ENCODE measurements at regions of chr4 and their contacts with region 1.

Region 1: DNA sequence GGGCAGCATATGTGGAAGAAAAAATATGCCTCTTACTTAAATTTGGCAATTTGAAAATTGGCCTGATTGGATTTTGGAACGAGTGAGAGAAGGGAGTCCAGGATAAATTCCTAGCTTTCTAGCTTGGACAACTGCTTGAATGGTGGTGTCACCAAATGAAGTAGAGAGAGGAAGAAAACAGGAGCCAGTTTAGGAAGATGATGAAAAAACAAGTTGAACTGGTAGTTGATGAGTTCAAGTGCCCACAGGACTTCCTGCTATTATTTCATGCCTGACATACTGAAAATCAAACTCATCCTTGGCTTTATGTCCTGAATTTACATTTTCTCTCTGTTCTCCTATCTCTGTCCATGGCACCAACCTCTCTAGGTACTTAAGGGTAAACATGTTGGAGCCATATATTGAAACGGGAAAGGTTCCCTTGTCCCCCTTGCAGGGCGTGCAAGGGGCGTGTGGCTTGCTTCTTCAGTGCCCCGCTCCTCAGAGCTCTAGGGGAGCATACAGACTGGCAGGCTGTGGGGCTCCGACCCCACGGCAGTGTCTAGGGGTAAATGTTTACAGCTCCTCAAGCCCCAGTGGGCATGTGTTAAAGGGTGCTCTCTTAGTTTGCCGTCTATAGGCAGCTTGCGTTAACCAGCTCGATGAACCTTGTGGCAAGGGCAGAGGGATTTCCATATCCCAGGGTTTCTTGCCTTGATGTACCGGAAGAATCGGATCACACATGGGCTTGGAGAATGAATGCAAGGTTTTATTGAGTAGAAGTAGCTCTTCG is 250.7 kb upstream of the PGRMC2 start:
- DNase-seq: peak in 1 of 2 experiments; percentile 56
- H3K4me3 ChIP-seq: no peak overlapping the region
- H3K27ac ChIP-seq: no peak overlapping the region
- H3K4me1 ChIP-seq: peaks cover 9% of the 10 kb centered on the region; the same call in 1 of the 2 replicates
- H3K27me3 ChIP-seq: no peaks in the 10 kb centered on the region
- CTCF ChIP-seq: no peak

Region 2: DNA sequence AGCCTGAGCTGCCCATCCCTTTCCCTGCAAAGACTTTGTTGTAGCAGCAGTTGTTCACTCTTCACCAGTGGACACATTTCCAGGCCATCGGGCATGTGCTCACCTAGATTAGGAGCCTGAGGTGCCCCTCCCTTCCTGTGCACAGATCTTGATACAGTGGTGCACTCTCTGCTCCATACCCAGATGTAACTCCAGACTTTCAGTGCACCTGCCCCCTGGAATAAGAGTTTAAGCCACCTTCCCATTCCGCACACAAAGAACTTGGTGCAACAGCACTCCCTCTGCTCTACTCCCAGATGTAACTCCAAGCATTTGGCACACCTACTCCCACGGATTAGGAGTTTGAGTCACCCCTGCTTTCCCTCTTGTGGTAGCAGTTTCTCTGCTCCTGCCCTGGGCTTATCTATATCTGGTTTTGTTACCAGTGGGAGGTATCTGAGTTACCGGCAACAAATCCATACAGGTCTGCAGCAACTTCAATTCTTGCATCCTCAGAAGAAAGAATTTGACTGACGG is 693.6 kb before region 1 on chr4:
- CTCF ChIA-PET with region 1: no interaction called
- POLR2A ChIA-PET with region 1: no interaction called
- intact Hi-C with region 1: no loop called
- DNase-seq: no peak
- H3K4me3 ChIP-seq: no peak overlapping the region
- H3K27ac ChIP-seq: no peak overlapping the region
- H3K4me1 ChIP-seq: no peaks in the 10 kb centered on the region
- H3K27me3 ChIP-seq: no peaks in the 10 kb centered on the region
- CTCF ChIP-seq: no peak

Region 3: GRCh38 chr4:128502818-128503527 is 35.3 kb before region 1 on chr4:
- CTCF ChIA-PET with region 1: no interaction called
- POLR2A ChIA-PET with region 1: interaction called, 13 read pairs
- intact Hi-C with region 1: no loop called
- DNase-seq: no peak
- H3K4me3 ChIP-seq: no peak overlapping the region
- H3K27ac ChIP-seq: no peak overlapping the region
- H3K4me1 ChIP-seq: no peaks in the 10 kb centered on the region
- H3K27me3 ChIP-seq: no peaks in the 10 kb centered on the region
- CTCF ChIP-seq: no peak

Region 4: DNA sequence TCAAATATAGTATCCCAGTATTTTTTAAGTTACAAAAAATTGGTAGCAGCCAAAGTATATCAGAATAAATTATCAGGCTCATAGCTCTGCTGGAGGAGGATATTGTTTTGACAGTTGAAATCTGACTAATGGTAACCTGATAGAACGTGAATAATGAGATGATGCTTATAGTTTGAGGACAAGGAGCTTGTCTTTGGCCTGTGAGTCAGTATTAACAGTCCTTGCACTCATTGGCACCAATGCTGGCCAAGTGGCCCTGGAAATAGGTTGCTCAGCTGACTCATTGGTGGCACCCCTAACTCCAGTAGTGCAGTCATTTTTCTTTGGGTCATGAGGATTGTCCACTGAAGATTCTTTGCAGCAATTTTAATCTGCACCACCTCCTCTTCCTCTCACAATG is 67.9 kb after region 1 on chr4:
- CTCF ChIA-PET with region 1: no interaction called
- POLR2A ChIA-PET with region 1: interaction called, 11 read pairs
- intact Hi-C with region 1: no loop called
- DNase-seq: peak in 1 of 2 experiments; percentile 43
- H3K4me3 ChIP-seq: no peak overlapping the region
- H3K27ac ChIP-seq: no peak overlapping the region
- H3K4me1 ChIP-seq: peaks cover 15% of the 10 kb centered on the region
- H3K27me3 ChIP-seq: no peaks in the 10 kb centered on the region
- CTCF ChIP-seq: no peak

Region 5: GRCh38 chr4:128718768-128719167 is 180.5 kb after region 1 on chr4:
- CTCF ChIA-PET with region 1: interaction called, 12 read pairs
- POLR2A ChIA-PET with region 1: no interaction called
- intact Hi-C with region 1: no loop called
- DNase-seq: no peak
- H3K4me3 ChIP-seq: no peak overlapping the region
- H3K27ac ChIP-seq: no peak overlapping the region
- H3K4me1 ChIP-seq: no peaks in the 10 kb centered on the region
- H3K27me3 ChIP-seq: no peaks in the 10 kb centered on the region
- CTCF ChIP-seq: no peak